GM10248 (cell line): ENCODE measurements at regions of chr15 and their contacts with region 1.

Region 1: DNA sequence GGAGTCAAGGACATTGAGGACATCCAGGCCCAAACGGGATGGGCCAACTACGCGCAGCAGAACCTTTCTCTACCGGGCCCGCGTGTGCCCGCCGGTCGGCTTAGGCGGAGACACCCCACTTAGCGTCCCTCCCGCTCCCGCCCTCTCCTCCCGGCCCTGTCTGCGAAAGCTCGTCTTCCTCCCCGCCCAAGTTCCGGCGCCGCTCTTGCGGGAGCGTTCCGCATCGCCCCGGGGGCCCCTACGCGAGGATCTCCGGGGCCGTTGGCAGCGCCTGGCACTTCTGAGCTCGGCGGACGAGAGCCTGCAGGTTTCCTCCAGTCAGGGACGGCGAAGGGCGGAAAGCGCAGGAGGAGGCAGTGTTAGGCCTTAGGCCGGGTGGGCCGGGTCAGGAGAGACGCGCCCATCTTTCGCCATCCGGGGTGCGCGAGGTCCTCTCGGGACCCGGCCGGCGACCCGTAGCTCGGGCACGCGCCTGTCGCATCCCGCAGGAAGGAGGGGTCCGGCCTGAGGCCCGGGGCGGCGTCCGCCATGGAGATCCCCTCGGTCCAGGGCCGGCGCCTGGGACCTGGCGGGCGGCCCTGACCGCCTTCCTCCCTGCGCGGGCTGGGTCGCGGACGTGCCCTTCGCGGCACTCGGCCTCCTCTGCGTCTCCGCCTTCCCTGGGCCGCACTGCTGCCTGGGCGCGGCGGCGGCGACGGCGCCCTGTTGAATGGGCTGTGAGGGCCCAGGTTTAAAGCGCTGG is at the start of gene FEM1B:
- DNase-seq: peak; percentile 92
- CTCF ChIP-seq: no peak

Region 2: DNA sequence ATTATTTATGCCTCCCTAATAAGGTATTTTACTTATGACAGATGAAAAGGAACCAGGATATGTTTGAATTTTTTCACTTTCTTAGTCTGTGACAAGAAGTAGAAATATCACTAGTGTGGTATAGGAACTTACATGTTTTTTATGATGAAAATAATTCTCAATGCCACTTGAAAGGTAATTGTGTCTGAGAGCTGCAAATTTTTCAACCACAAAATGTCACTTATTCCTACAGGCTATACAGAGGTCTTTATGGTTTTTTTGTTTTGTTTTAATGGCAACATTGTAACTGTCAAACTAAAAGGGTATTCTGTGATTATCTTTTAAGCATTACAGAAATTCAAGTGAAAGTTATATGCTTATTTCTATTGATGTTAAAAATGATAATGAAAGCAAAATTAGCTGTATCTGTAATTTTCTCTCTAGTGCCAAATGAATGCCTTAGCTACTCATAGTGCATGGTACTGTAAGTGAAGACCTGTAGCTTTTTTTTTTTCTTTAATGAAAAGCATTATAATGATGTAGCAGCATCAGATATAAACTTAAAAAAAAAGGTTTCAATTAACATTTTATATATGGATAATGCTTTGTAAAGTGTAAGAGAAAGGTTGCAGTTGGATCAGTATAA is 14.5 kb after region 1 on chr15:
- CTCF ChIA-PET with region 1: interaction called, 29 read pairs
- POLR2A ChIA-PET with region 1: no interaction called
- DNase-seq: no peak
- CTCF ChIP-seq: no peak

Region 3: DNA sequence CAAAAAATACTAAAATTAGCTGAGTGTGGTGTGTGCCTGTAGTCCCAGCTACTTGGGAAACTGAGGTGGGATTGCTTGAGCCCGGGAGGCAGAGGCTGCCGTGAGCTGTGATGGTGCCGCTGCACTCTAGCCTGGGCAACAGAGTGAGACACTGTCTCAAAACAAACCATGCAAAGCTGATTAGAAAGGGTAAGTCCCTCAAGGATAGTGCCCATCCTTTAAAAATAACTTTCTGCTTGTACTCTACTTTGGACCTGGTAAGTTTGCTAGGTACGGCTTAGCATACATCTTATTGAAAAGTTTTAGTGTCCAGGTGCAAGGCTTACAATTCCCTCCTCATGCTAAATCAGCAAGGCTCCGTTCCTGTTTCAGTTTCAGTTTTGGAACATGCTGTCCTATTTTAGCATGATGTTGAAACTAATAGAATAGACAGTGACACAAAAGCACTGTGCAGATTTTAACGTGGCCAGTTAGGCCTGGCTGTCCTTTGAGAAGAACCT is 21.2 kb after region 1 on chr15:
- CTCF ChIA-PET with region 1: interaction called, 11 read pairs
- POLR2A ChIA-PET with region 1: no interaction called
- DNase-seq: peak; percentile 70
- CTCF ChIP-seq: no peak